AG04449 (cell line): ENCODE measurements at regions of chr5 and their contacts with region 1.

Region 1: DNA sequence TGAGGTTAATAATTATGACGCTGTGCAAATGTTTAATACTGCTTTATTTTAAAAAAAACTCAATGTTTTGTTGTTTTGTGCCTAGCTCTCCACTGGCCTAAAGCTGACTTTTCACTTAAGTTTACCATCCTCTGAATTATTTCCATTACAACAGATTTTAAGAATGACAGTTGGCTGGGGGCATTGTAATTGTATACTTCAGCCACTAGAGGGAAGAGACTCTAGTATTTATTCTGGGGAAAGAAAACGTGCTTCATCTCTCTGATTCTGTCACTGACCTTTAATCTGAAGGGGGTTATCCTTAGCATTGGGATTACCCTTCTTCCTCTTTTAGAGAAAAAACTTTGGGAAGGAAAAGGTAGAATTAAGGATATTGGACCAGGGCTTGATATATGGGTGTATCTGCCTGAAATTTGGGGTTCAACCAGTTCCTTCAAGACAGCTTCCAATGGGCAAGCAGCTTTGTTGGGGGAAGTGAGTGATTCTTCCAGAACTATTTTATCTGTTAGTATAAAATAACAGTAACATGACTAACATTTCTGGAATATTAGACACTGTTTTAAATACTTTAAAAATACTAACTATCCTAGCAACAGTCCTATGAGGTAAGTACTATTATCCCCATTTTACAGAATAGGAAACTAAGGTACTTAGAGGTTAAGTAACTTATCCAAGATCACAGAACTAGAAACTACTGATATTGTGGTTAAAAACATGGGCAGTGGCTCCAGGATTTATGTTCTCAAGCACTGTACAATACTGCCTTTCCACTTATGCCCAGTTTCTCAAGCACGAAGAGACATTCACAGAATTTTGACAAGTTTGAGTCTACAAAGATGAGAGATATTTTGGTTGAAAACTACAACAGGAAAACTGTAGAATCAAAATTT is 208.4 kb downstream of the CD180 start:
- DNase-seq: no peak
- H3K4me3 ChIP-seq: no peak overlapping the region
- CTCF ChIP-seq: peak; percentile 52

Region 2: DNA sequence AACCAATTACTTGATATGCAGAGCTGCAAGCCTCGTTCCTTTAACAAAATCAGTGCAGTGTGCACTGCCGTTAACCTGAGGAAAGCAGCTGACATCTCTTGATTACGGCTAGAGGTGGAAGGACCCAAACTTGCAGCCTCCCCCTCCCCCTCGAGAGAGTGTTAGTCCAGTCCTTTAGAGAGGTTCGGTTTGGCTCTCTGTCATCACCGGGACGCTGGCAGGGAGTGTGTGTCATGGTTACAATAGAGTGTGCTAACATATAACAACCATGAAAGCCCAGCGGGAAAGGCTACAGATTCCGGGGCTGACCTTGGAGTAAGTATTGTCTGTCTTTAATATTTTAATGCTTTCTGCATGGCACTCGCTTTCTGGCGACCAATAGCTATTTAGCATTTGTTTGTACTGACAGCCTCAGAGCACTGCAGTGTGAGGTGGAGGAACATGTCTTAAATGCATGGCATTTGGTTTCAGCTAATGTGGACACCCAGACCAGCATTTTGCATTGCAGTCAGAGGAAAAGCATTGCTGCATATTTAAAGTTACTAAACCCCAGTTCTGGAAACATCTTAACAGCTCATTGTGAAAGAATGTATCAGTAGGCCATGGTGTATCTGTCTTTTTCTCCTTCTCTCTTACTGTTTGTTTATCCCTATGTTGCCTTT is 29.1 kb before region 1 on chr5:
- CTCF ChIA-PET with region 1: interaction called, 18 read pairs
- POLR2A ChIA-PET with region 1: no interaction called
- DNase-seq: peak; percentile 46
- H3K4me3 ChIP-seq: peak overlapping the region; percentile 66
- CTCF ChIP-seq: no peak

Region 3: GRCh38 chr5:66967102-66967501 is 21.1 kb before region 1 on chr5:
- CTCF ChIA-PET with region 1: interaction called, 85 read pairs
- POLR2A ChIA-PET with region 1: no interaction called
- DNase-seq: peak; percentile 66
- H3K4me3 ChIP-seq: no peak overlapping the region
- CTCF ChIP-seq: no peak

Region 4: GRCh38 chr5:66974256-66974655 is 13.9 kb before region 1 on chr5:
- CTCF ChIA-PET with region 1: interaction called, 85 read pairs
- POLR2A ChIA-PET with region 1: no interaction called
- DNase-seq: no peak
- H3K4me3 ChIP-seq: no peak overlapping the region
- CTCF ChIP-seq: no peak

Region 5: GRCh38 chr5:67003935-67004729 is 15.9 kb after region 1 on chr5:
- CTCF ChIA-PET with region 1: interaction called, 59 read pairs
- POLR2A ChIA-PET with region 1: no interaction called
- DNase-seq: peak; percentile 67
- H3K4me3 ChIP-seq: peak overlapping the region; percentile 64
- CTCF ChIP-seq: no peak

Region 6: DNA sequence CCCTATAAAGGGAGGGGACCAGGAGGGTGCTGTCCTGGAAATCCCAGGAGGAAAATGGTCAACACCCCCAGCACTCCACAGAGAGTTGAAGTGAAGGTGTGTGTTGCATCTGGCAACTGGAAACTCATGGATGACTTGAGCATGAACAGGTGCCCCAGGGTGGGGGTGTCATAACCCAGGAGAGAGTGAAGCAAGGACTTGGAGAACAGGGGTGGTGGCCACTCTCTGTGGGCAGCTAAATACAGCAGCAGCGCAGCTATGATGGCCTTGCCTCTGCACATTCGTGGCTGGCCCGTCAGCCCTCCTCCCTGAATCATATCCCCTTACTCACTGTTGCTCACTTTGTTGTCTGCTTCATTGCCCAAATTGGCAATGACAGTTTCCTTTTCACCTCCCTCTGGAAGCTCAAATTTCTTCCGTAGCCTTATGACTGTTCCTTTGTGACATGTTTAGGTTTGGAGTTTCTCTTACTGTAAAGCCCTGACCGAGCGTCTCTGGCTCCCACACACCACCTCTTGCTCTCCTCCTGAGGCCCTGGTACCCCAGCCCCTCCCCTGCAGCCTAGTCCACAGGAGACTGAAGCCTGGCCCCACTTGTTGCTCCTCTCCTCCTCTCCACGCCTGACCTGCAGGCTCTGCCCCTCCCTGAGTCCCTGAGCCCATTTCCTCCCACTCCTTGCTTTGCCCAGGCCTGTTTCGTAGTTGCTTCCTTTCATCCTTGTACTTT is 22.7 kb after region 1 on chr5:
- CTCF ChIA-PET with region 1: interaction called, 59 read pairs
- POLR2A ChIA-PET with region 1: interaction called, 3 read pairs
- DNase-seq: no peak
- H3K4me3 ChIP-seq: no peak overlapping the region; the same call in none of the 2 replicates
- CTCF ChIP-seq: no peak

Region 7: DNA sequence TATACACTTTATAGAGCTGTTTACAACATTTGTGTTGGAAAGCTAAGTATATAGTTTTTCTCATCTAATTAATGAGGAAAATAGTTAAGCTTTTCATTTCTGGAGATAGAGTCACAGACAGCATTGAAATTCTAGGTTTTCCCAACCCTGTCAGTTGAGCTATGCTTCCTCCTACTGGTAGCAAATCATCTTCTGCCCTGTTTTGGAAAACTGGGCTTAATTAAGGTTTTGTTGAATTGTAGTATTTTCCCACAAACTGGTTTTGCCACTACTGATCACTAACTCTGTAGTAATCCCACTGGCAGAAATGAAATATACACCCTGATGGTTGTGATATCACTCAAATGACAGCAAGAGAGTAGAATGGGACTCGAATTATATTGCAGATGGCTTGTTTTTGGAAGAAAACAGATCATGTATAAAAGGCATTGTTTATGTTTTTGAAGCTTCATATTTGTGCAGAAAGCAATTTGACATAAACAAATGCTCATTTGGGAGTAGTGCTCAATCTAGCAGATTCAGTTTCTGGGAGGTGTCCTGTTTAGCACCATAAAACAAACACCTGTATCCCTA is 161.8 kb after region 1 on chr5:
- CTCF ChIA-PET with region 1: interaction called, 36 read pairs
- POLR2A ChIA-PET with region 1: no interaction called
- DNase-seq: no peak
- H3K4me3 ChIP-seq: no peak overlapping the region
- CTCF ChIP-seq: peak; percentile 49